ENCODE measurements at regions of chr1 and their contacts with region 1.

Region 1: DNA sequence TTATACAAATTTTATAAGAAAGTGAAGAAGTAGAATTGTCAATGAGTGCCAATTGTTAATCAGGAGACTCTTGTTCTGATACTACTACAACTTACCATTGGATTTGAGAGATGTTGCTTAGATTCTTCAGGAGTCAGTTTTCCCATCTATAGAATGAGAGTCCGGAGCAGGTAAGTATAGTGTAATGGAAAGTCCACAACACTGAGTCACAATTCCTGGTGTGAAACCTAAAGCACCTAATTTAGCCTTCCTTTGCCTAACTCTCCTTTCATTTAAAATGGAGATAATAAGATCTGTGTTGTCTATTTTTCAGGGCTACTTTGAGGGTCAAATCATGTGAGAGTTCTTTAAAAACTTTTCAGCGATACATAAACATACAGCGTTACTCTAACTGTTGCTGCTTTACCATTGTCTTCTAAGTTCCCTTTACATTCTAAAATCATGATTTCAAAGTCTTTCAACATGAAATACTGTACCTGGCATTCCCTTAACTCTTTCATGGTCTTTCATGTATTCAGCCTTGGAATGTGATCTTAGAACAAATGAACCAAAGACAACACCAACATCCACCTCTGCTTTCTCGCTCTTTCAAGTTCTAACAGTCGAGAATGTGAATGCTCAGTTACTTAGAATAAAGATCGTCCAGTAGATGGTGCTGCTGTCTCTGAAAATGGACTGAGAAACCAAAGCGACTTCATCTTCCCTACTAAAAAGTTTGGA is 90.9 kb downstream of the SLC30A10 start:
- DNase-seq: no peak
- H3K4me3 ChIP-seq: no peak overlapping the region
- H3K27ac ChIP-seq: no peak overlapping the region
- H3K4me1 ChIP-seq: no peaks in the 10 kb centered on the region
- H3K27me3 ChIP-seq: no peaks in the 10 kb centered on the region
- CTCF ChIP-seq: peak in 1 of 3 donors; percentile 15
- EP300 ChIP-seq: no peak
- POLR2A ChIP-seq: no peak

Region 2: GRCh38 chr1:220046052-220046930 is 208.9 kb after region 1 on chr1 and contains the start of gene EPRS1:
- intact Hi-C with region 1: loop called in 1 of 4 experiments (anchors 10 kb)
- DNase-seq: peak; percentile 85 to 92 (median 89)
- H3K4me3 ChIP-seq: peak within 1 kb of the TSS; percentile 81
- H3K27ac ChIP-seq: peak within 1 kb of the TSS; percentile 56 to 76
- H3K4me1 ChIP-seq: peaks cover 1% of the 10 kb centered on the region
- H3K27me3 ChIP-seq: no peaks in the 10 kb centered on the region
- CTCF ChIP-seq: peak; percentile 72 to 82 (median 80)
- EP300 ChIP-seq: no peak
- POLR2A ChIP-seq: peak; percentile 21
- total RNA-seq, gene EPRS1: 34.9 to 135 (median 75.3) TPM